ENCODE measurements at regions of chr16 and their contacts with region 1.

Region 1: GRCh38 chr16:69150146-69150865 is 17.9 kb downstream of the UTP4 start:
- DNase-seq: peak; percentile 72
- ATAC-seq: peak; percentile 81
- H3K4me3 Mint-ChIP-seq: no peak overlapping the region
- H3K27ac Mint-ChIP-seq: peak overlapping the region; percentile 32
- H3K4me1 Mint-ChIP-seq: no peaks in the 10 kb centered on the region
- H3K27me3 Mint-ChIP-seq: no peaks in the 10 kb centered on the region

Region 2: GRCh38 chr16:69132424-69133252 is 17.7 kb before region 1 on chr16 and contains the starts of genes CHTF8 and UTP4:
- CTCF ChIA-PET with region 1: interaction called, 15 read pairs
- POLR2A ChIA-PET with region 1: interaction called, 6 read pairs
- DNase-seq: peak; percentile 90
- ATAC-seq: peak; percentile 95
- H3K4me3 Mint-ChIP-seq: peak within 1 kb of the TSS; percentile 94
- H3K27ac Mint-ChIP-seq: peak within 1 kb of the TSS; percentile 92
- H3K4me1 Mint-ChIP-seq: peaks cover 54% of the 10 kb centered on the region
- H3K27me3 Mint-ChIP-seq: no peaks in the 10 kb centered on the region
- total RNA-seq, gene CHTF8: 132 to 143 TPM
- total RNA-seq, gene UTP4: 56.3 to 59.7 TPM

Region 3: DNA sequence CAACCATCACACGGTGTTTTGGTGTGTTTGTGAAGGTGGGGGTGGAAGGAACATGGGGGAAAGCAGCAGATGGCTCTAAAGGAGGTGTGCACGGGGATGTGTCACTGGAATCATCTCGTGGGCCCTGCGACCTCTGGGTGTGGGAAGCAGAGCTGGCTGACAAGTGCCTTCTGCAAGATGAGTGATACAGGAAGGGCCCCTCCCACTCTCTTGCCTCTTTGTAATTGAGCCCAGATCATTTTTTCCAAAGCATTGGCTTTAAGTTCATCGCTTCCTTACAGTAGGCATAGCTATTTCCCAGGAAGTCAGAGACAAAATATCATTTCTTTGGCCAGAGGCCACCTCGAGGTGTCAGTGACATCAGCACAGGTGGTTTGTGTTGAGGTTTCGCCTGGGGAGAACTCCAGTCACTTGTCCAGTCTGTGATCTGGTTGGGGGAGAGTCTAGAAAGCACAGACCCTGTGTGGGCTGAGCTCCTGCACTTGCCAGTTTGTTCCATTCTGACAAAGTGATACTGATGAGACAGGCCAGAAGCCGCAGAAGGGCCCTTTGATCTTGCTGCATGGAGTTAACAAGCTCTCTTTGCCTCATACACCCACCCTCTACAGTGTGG is 16.0 kb after region 1 on chr16:
- CTCF ChIA-PET with region 1: interaction called, 39 read pairs
- POLR2A ChIA-PET with region 1: no interaction called
- DNase-seq: peak; percentile 67
- ATAC-seq: peak; percentile 96
- H3K4me3 Mint-ChIP-seq: no peak overlapping the region
- H3K27ac Mint-ChIP-seq: peak overlapping the region; percentile 78
- H3K4me1 Mint-ChIP-seq: peaks cover 27% of the 10 kb centered on the region
- H3K27me3 Mint-ChIP-seq: no peaks in the 10 kb centered on the region

Region 4: DNA sequence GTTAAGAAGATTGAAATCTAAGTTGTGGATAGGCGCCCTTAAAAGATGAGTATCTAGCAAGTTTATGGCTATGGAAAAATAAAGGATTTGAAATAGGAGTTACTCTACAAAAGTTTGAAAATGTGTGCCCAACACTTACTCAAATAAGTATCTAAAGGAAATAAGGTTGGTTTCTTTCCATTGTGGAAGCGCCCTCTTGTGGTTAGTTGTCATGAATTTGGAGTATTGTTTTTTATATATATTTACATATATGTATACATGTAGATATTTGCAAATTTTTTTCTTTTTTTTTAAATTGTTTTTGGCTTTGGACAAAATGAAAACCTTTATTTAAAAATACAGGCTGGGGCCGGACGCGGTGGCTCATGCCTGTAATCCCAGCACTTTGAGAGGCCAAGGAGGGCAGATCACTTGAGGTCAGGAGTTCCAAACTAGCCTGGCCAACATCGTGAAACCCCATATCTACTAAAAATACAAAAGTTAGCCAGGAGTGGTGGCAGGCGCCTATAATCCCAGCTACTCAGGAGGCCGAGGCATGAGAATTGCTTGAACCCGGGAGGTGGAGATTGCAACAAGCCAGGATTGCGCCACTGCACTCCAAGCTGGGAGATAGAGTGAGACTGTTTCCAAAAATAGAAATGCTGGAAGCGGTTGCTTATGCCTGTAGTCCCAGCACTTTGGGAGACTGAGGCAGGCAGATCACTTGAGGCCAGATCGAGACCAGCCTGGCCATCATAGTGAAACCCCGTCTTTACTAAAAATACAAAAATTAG is 136.8 kb after region 1 on chr16:
- CTCF ChIA-PET with region 1: interaction called, 95 read pairs
- POLR2A ChIA-PET with region 1: no interaction called
- DNase-seq: peak; percentile 69
- ATAC-seq: peak; percentile 53
- H3K4me3 Mint-ChIP-seq: no peak overlapping the region
- H3K27ac Mint-ChIP-seq: no peak overlapping the region
- H3K4me1 Mint-ChIP-seq: peaks cover 2% of the 10 kb centered on the region
- H3K27me3 Mint-ChIP-seq: no peaks in the 10 kb centered on the region

Region 5: GRCh38 chr16:69329369-69330285 is 179.3 kb after region 1 on chr16:
- CTCF ChIA-PET with region 1: interaction called, 11 read pairs
- POLR2A ChIA-PET with region 1: no interaction called
- DNase-seq: peak; percentile 62
- ATAC-seq: peak; percentile 57
- H3K4me3 Mint-ChIP-seq: peak overlapping the region; percentile 82
- H3K27ac Mint-ChIP-seq: peak overlapping the region; percentile 68
- H3K4me1 Mint-ChIP-seq: peaks cover 38% of the 10 kb centered on the region
- H3K27me3 Mint-ChIP-seq: no peaks in the 10 kb centered on the region